Lower leg skin (tissue), 4 donors: ENCODE measurements at regions of chr17 and their contacts with region 1.

Region 1: DNA sequence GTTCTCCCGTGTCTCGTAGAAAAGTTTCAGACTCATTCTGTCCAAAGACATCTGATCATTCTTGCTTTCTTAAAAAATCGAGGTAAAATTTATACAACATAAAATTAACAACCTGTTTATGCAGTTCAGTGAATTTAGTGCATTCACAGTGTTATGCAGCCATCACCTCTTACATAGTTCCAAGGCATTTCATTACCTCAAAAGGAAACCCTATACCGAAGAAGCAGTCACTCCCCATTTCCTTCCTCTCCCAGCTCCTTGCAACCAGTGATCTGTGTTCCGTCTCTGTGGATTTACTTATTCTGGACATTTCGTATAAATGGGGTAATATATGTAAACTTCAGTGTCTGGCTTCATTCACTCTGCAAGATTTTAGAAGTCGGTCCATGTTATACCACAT is 103.5 kb upstream of the HS3ST3A1 start:
- DNase-seq: no peak
- H3K4me3 ChIP-seq: no peak overlapping the region
- CTCF ChIP-seq: no peak
- POLR2A ChIP-seq: no peak

Region 2: DNA sequence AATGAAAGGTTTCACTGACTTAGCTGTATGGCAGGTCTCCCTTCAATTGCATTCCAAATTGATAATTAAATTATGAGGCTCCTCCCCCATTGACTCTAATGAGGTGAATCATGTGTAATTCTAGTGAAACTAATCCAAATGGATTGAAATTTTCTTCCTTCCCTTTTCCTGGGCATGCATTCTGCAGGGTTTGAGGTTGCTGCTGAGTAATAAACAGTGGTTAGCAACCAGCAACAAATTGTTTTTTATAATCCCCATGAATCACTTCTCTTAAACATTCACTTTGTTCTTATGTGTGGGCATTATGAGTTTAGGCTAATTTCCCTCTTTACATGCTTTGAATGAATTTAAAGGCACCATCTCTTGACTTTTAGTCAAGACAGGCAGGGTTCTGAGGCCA is 996.2 kb before region 1 on chr17:
- intact Hi-C with region 1: loop called (anchors 5 kb)
- DNase-seq: no peak
- H3K4me3 ChIP-seq: no peak overlapping the region
- CTCF ChIP-seq: no peak
- POLR2A ChIP-seq: no peak

Region 3: DNA sequence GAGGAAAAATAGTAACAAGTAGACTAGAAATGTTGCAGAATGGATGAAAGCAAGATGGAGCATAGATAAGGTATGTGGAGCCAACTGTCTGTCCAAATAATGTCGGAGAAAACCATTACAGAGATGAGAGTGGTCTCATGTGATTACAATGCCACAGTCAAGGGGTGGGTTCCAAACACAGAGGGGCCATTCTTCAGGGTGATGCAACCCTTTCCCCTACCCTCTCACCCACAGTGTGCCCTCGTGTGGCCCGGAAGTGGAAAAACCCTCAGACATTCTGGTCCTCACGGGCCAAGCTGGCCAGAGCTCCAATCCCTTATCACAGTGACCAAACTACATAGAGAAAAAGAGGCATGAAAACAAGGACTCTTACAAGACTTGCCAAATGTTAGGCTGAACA is 85.8 kb before region 1 on chr17:
- intact Hi-C with region 1: no loop called
- DNase-seq: no peak
- H3K4me3 ChIP-seq: no peak overlapping the region
- CTCF ChIP-seq: no peak
- POLR2A ChIP-seq: no peak

Region 4: DNA sequence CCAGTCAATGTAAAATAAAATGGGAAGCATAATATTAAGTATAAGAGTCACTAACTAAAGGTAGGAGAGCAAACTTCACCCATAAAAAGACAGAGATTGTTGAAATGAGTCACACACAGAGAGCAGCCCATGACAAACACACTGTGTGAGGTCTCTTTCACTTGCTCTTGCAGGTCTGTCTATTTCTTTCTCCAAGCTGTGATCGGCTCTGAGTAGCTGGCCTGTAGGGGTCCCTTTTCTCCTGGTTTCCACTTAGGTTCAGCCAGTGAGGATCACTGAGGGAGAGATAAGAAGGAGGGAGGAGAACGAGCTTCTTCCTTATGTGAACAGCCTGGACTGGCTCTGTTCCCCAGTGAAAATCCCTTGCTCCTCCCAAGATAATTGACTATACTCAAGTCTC is 30.2 kb after region 1 on chr17:
- intact Hi-C with region 1: no loop called
- DNase-seq: no peak
- H3K4me3 ChIP-seq: no peak overlapping the region
- CTCF ChIP-seq: no peak
- POLR2A ChIP-seq: no peak

Region 5: GRCh38 chr17:13851889-13852288 is 146.7 kb after region 1 on chr17:
- intact Hi-C with region 1: no loop called
- DNase-seq: no peak
- H3K4me3 ChIP-seq: no peak overlapping the region
- CTCF ChIP-seq: no peak
- POLR2A ChIP-seq: no peak